ENCODE measurements at regions of chr6 and their contacts with region 1.

Region 1: DNA sequence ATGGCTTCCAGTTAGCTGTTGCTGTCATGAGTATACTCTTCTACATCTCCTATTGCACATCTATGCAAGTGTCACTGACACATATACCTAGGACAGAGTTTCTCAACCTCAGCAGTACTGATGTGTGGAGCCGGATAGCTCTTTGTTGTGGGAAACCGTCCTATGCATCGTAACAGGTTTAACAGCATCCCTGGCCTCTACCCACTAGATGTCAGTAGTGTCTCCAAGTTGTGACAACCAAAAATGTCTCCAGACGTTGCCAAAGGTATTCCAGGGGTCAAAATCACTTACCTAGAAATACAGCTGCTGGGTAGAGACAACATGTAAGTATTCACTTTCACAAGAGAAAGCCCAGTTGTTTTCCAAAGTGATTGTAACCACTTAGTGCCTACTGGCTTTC is 637.6 kb downstream of the RNF144B start:
- DNase-seq: no peak
- H3K4me3 ChIP-seq: no peak overlapping the region
- CTCF ChIP-seq: peak; percentile 40

Region 2: GRCh38 chr6:18985996-18986395 is 38.7 kb before region 1 on chr6:
- CTCF ChIA-PET with region 1: no interaction called
- POLR2A ChIA-PET with region 1: no interaction called
- DNase-seq: no peak
- H3K4me3 ChIP-seq: no peak overlapping the region
- CTCF ChIP-seq: no peak

Region 3: DNA sequence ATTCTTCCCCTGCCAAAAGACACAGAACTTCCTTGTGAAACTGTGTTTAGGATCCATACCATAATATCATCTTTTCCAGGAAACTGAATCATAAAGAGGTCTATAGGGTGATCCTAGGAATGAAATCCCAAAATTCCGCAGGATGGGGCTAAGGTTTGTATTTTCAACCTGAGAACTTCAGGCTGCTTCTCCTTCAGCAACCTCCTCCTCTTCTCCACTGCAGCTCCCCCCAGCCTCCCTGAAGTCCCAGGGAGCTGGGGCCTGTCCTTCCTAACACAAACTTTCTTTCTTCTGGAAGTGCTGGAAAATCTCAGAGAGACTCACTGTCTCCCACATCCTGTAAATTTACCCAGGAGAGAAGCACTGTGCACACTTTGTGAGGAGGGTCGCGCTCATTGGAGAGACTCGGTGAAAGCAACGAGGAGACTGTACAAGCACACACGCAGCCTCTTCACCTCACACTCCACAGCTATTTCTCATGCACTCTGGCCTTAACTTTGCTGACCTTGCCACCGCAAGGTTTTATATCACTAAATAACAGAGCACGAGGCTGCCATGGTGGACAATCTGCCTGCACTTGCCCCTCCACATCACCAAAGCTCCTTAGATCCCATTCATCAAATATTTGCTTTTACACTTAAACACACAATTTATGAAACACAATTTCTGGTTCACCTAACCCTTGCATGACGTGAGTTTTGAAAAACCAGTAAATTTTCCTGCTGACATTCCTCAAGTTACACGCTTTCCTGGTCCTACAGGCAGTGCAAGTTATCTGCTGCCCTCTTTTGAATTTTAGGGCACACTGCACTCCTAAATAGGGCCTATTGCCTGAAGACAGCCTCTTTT is 826.7 kb after region 1 on chr6:
- CTCF ChIA-PET with region 1: interaction called, 11 read pairs
- POLR2A ChIA-PET with region 1: no interaction called
- DNase-seq: peak; percentile 36
- H3K4me3 ChIP-seq: peak overlapping the region; percentile 12; the same call in 1 of the 2 replicates
- CTCF ChIP-seq: peak; percentile 83

Measured in AG04449 (cell line).